ENCODE measurements at regions of chr4 and their contacts with region 1.

Region 1: GRCh38 chr4:24488399-24489164 is 95.8 kb downstream of the DHX15 start:
- DNase-seq: peak; percentile 84
- ATAC-seq: peak; percentile 79
- H3K4me3 Mint-ChIP-seq: no peak overlapping the region
- H3K27ac Mint-ChIP-seq: no peak overlapping the region
- H3K4me1 Mint-ChIP-seq: no peaks in the 10 kb centered on the region
- H3K27me3 Mint-ChIP-seq: peaks cover 19% of the 10 kb centered on the region
- CTCF ChIP-seq: peak; percentile 74

Region 2: DNA sequence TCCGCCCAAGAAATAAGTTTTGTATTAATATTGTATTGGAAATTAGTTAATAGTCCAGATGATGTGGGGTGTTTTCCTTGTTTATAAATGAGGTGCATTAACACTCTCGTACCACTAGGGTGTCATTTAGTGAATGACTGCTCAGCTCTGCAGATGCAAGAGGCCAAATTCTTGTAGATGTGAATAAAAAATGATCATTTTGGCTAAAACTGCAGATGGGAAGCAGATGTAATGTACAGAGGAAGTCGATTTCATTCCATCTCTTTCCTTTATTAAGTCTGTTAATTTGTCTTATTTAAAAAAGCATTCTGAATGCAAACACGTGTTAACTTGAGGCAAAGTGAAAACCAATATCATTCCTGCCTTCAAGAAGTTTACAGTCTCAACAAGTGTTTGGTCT is 12.3 kb before region 1 on chr4:
- CTCF ChIA-PET with region 1: interaction called, 22 read pairs
- POLR2A ChIA-PET with region 1: interaction called, 3 read pairs
- intact Hi-C with region 1: no loop called
- DNase-seq: no peak
- ATAC-seq: no peak
- H3K4me3 Mint-ChIP-seq: no peak overlapping the region
- H3K27ac Mint-ChIP-seq: no peak overlapping the region
- H3K4me1 Mint-ChIP-seq: peaks cover 9% of the 10 kb centered on the region
- H3K27me3 Mint-ChIP-seq: peaks cover 39% of the 10 kb centered on the region
- CTCF ChIP-seq: peak; percentile 77

Region 3: DNA sequence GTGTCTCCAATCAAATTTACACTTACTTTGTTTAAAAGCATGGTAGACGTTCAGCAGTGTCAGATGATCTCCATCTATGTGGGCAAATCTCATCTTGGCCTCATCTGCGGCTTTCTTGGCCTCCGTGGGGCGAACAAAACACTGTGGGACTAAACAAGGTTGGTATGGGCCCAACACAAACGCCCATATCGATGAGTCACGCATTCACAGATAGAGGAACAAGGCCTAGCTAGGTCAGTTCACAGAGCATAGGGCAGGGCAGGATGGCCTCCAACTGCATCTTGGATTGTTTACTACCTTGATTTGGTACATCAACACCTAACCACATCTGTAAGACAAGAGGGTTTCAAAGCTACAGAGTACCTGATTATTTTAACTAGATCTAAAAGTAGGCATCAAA is 48.4 kb after region 1 on chr4:
- CTCF ChIA-PET with region 1: no interaction called
- POLR2A ChIA-PET with region 1: no interaction called
- intact Hi-C with region 1: no loop called
- DNase-seq: no peak
- ATAC-seq: no peak
- H3K4me3 Mint-ChIP-seq: no peak overlapping the region
- H3K27ac Mint-ChIP-seq: no peak overlapping the region
- H3K4me1 Mint-ChIP-seq: peaks cover 16% of the 10 kb centered on the region
- H3K27me3 Mint-ChIP-seq: no peaks in the 10 kb centered on the region
- CTCF ChIP-seq: no peak

Region 4: GRCh38 chr4:24686871-24687680 is 198.5 kb after region 1 on chr4:
- CTCF ChIA-PET with region 1: interaction called, 6 read pairs
- POLR2A ChIA-PET with region 1: no interaction called
- intact Hi-C with region 1: loop called (anchors 5 kb)
- DNase-seq: peak; percentile 50
- ATAC-seq: no peak
- H3K4me3 Mint-ChIP-seq: no peak overlapping the region
- H3K27ac Mint-ChIP-seq: no peak overlapping the region
- H3K4me1 Mint-ChIP-seq: no peaks in the 10 kb centered on the region
- H3K27me3 Mint-ChIP-seq: peaks cover 6% of the 10 kb centered on the region
- CTCF ChIP-seq: peak; percentile 71

Measured in activated CD8-positive, alpha-beta T cell treated with anti-CD3 and anti-CD28 coated beads for 36 hours (primary cell).